Common myeloid progenitor, CD34-positive (primary cell): ENCODE measurements at regions of chr11 and their contacts with region 1.

Region 1: GRCh38 chr11:118198370-118198769 is 21.9 kb upstream of the SCN2B start:
- DNase-seq: peak; percentile 73 to 81 (median 73)
- H3K4me3 ChIP-seq: peak overlapping the region in 3 of 7 experiments; percentile 24 to 58 (median 38)
- H3K27ac ChIP-seq: no peak overlapping the region
- H3K4me1 ChIP-seq: peaks cover 0 to 23% (median 16%) of the 10 kb centered on the region in 4 experiments
- H3K27me3 ChIP-seq: no peaks in the 10 kb centered on the region

Region 2: GRCh38 chr11:118211006-118211405 is 12.6 kb after region 1 on chr11:
- CTCF ChIA-PET with region 1: interaction called, 18 read pairs
- POLR2A ChIA-PET with region 1: no interaction called
- DNase-seq: no peak
- H3K4me3 ChIP-seq: no peak overlapping the region
- H3K27ac ChIP-seq: no peak overlapping the region
- H3K4me1 ChIP-seq: peaks cover 37 to 57% (median 55%) of the 10 kb centered on the region in 4 experiments
- H3K27me3 ChIP-seq: no peaks in the 10 kb centered on the region

Region 3: GRCh38 chr11:118240999-118241768 is 42.8 kb after region 1 on chr11:
- CTCF ChIA-PET with region 1: interaction called, 18 read pairs
- POLR2A ChIA-PET with region 1: interaction called, 5 read pairs
- DNase-seq: peak; percentile 97 to 99 (median 97)
- H3K4me3 ChIP-seq: peak overlapping the region in 4 of 7 experiments; percentile 9 to 58 (median 42)
- H3K27ac ChIP-seq: peak overlapping the region; percentile 85
- H3K4me1 ChIP-seq: peaks cover 46 to 71% (median 56%) of the 10 kb centered on the region in 4 experiments
- H3K27me3 ChIP-seq: no peaks in the 10 kb centered on the region

Region 4: GRCh38 chr11:118251858-118252652 is 53.7 kb after region 1 on chr11 and contains the start of gene MPZL3:
- CTCF ChIA-PET with region 1: interaction called, 18 read pairs
- POLR2A ChIA-PET with region 1: interaction called, 7 read pairs
- DNase-seq: peak; percentile 86 to 92 (median 91)
- H3K4me3 ChIP-seq: peak within 1 kb of the TSS; percentile 66 to 99 (median 96)
- H3K27ac ChIP-seq: peak within 1 kb of the TSS; percentile 97
- H3K4me1 ChIP-seq: peaks cover 2 to 19% (median 11%) of the 10 kb centered on the region in 4 experiments
- H3K27me3 ChIP-seq: no peaks in the 10 kb centered on the region

Region 5: GRCh38 chr11:118277306-118277705 is 78.9 kb after region 1 on chr11:
- CTCF ChIA-PET with region 1: interaction called, 14 read pairs
- POLR2A ChIA-PET with region 1: no interaction called
- DNase-seq: no peak
- H3K4me3 ChIP-seq: no peak overlapping the region
- H3K27ac ChIP-seq: no peak overlapping the region
- H3K4me1 ChIP-seq: no peaks in the 10 kb centered on the region
- H3K27me3 ChIP-seq: no peaks in the 10 kb centered on the region

Region 6: DNA sequence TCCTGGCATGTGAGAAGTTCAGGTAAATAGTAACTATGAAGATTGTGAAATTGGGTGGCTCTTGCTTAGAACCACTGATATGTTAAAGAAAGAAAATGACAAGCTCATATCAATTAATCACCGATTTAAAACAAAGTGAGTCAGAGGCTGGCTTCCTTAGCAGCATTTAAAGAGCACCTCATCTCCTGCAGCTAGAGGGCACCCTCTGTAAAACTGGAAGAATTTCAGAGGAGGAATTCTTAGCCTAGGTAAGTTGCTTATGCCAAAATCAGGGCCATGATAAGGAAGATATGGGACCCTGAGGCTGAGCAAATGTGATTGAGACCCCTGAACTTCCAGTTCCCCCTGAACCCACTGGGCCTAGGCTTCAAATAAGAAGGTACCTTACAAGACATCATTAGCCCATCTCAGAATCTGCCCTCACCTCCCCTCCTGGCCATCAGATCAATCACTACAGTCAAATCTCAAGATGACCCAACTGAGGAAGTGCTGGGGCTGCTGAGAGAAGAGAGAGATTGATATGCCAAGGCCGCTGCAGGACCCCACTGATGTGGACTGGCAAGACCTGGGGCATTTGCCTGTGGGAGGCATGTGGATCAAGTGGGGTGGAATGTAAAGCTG is 97.6 kb after region 1 on chr11:
- CTCF ChIA-PET with region 1: interaction called, 49 read pairs
- POLR2A ChIA-PET with region 1: no interaction called
- DNase-seq: peak; percentile 56 to 76 (median 74)
- H3K4me3 ChIP-seq: no peak overlapping the region
- H3K27ac ChIP-seq: no peak overlapping the region
- H3K4me1 ChIP-seq: peaks cover 0 to 2% (median 0%) of the 10 kb centered on the region in 4 experiments
- H3K27me3 ChIP-seq: no peaks in the 10 kb centered on the region

Region 7: GRCh38 chr11:118338637-118339061 is 140.3 kb after region 1 on chr11:
- CTCF ChIA-PET with region 1: no interaction called
- POLR2A ChIA-PET with region 1: no interaction called
- DNase-seq: peak in 2 of 3 donors; percentile 37 to 56
- H3K4me3 ChIP-seq: no peak overlapping the region
- H3K27ac ChIP-seq: no peak overlapping the region
- H3K4me1 ChIP-seq: peaks cover 0 to 10% (median 2%) of the 10 kb centered on the region in 4 experiments
- H3K27me3 ChIP-seq: no peaks in the 10 kb centered on the region

Region 8: DNA sequence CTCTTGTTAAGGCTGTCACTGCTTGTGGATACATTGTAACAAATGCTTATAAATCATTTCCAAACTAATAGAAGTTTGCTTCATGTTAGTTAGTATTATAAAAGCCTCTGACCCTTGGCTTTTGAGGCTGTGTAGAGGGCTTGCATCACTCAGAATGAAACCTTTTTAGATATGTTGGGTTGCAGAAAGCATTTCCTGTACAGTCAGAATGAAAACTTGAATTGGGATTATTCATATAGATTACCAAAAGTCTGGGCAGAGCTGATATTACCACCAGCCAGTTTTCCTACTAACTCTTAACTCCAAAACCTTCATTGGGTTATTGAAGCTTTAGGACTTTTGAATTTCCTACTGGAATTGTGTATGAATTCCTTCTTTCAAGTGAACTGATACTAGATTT is 249.9 kb after region 1 on chr11:
- CTCF ChIA-PET with region 1: no interaction called
- POLR2A ChIA-PET with region 1: no interaction called
- DNase-seq: no peak
- H3K4me3 ChIP-seq: no peak overlapping the region
- H3K27ac ChIP-seq: peak overlapping the region in 1 of 2 experiments; percentile 18
- H3K4me1 ChIP-seq: peaks cover 0 to 11% (median 4%) of the 10 kb centered on the region in 4 experiments
- H3K27me3 ChIP-seq: no peaks in the 10 kb centered on the region